Activated CD4-positive, alpha-beta T cell treated with anti-CD3 and anti-CD28 coated beads, Interleukin-2, amount 10 ng/mL, durations not matched to agents 24 days and 14 days (primary cell): ENCODE measurements at regions of chr13 and their contacts with region 1.

Region 1: GRCh38 chr13:27424246-27425157 is at the start of gene GTF3A:
- DNase-seq: peak; percentile 97
- H3K4me3 Mint-ChIP-seq: peak within 1 kb of the TSS; percentile 86
- H3K27ac Mint-ChIP-seq: peak within 1 kb of the TSS; percentile 95
- H3K4me1 Mint-ChIP-seq: peaks cover 35% of the 10 kb centered on the region
- H3K27me3 Mint-ChIP-seq: no peaks in the 10 kb centered on the region
- total RNA-seq, gene GTF3A: 279 and 284 TPM in 2 replicates

Region 2: DNA sequence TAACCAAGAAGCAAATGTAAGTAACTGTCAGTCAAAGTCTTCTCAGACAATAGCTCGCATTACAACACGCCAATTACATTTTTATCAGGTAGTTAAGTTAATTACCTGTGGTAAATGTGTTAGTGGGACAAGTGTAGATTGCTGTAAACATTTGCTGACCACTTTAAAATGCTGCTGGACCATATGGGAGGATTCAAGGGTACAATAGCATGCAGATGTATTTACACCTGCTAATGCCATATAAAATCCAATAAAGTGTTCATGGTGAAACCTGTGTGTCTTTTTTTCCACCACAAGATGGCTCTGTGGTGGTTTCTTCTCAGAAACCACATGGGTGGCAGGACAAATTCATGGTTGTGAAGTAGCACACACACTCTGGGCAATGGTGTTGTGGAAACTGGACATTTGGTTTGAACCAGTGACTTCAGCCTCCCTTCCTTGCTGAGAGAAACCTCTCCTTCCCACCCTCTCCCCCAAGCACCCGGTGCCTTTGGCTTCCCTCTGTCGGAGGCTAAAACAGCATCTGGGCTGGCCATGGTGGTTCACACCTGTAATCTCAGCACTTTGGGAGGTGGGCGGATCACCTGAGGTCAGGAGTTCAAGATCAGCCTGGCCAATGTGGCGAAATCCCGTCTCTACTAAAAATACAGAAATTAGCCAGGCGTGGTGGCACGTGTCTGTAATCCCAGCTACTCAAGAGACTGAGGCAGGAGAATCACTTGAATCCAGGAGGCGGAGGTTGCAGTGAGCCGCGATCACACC is 18.1 kb before region 1 on chr13:
- intact Hi-C with region 1: loop called (anchors 1 kb)
- DNase-seq: peak; percentile 80
- H3K4me3 Mint-ChIP-seq: no peak overlapping the region
- H3K27ac Mint-ChIP-seq: no peak overlapping the region
- H3K4me1 Mint-ChIP-seq: no peaks in the 10 kb centered on the region
- H3K27me3 Mint-ChIP-seq: peaks cover 32% of the 10 kb centered on the region

Region 3: GRCh38 chr13:27449936-27450828 is 25.7 kb after region 1 on chr13 and contains the start of gene MTIF3:
- intact Hi-C with region 1: loop called (anchors 1 kb)
- DNase-seq: peak; percentile 99
- H3K4me3 Mint-ChIP-seq: peak within 1 kb of the TSS; percentile 88
- H3K27ac Mint-ChIP-seq: peak within 1 kb of the TSS; percentile 96
- H3K4me1 Mint-ChIP-seq: peaks cover 43% of the 10 kb centered on the region
- H3K27me3 Mint-ChIP-seq: no peaks in the 10 kb centered on the region
- total RNA-seq, gene MTIF3: 28.8 and 30.4 TPM in 2 replicates

Region 4: GRCh38 chr13:27620377-27621115 is 196.0 kb after region 1 on chr13 and contains the start of gene LNX2:
- intact Hi-C with region 1: loop called (anchors 1 kb)
- DNase-seq: peak; percentile 99
- H3K4me3 Mint-ChIP-seq: peak within 1 kb of the TSS; percentile 98
- H3K27ac Mint-ChIP-seq: peak within 1 kb of the TSS; percentile 93
- H3K4me1 Mint-ChIP-seq: peaks cover 44% of the 10 kb centered on the region
- H3K27me3 Mint-ChIP-seq: no peaks in the 10 kb centered on the region
- total RNA-seq, gene LNX2: 4.1 and 4.3 TPM in 2 replicates

Region 5: DNA sequence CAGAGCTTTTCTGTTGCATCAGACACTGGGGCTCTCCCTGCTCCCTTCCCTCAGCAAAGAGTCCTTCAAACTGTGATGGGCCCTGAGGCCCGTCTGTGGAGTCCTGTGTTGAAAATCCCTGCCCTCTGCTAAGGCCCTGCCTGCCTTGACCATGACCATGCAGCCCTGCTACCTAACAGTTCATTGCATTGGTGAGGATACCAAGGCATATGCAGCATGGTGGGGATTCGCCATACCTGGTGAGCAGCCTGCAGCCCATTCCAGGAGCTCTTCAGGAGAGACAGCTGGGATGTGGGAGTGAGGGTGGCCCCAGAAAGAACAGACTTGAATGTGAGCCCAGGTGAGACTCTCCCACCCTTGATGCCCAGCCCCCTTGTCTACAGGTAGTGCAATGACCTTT is 297.2 kb after region 1 on chr13:
- intact Hi-C with region 1: no loop called
- DNase-seq: no peak
- H3K4me3 Mint-ChIP-seq: no peak overlapping the region
- H3K27ac Mint-ChIP-seq: no peak overlapping the region
- H3K4me1 Mint-ChIP-seq: no peaks in the 10 kb centered on the region
- H3K27me3 Mint-ChIP-seq: peaks cover 6% of the 10 kb centered on the region